ENCODE measurements at regions of chr6 and their contacts with region 1.

Region 1: GRCh38 chr6:73129653-73130443 is 95.4 kb downstream of the KHDC1L start:
- DNase-seq: peak; percentile 59
- H3K4me3 ChIP-seq: no peak overlapping the region
- H3K27ac ChIP-seq: no peak overlapping the region
- H3K4me1 ChIP-seq: no peaks in the 10 kb centered on the region
- H3K27me3 ChIP-seq: peaks cover 2 to 23% of the 10 kb centered on the region in 2 experiments
- CTCF ChIP-seq: peak; percentile 96 to 97
- POLR2A ChIP-seq: no peak

Region 2: GRCh38 chr6:72250664-72251063 is 879.2 kb before region 1 on chr6:
- CTCF ChIA-PET with region 1: interaction called, 7 read pairs
- POLR2A ChIA-PET with region 1: no interaction called
- dilution Hi-C with region 1: no loop called
- intact Hi-C with region 1: loop called (anchors 2 kb)
- DNase-seq: no peak
- H3K4me3 ChIP-seq: no peak overlapping the region
- H3K27ac ChIP-seq: no peak overlapping the region
- H3K4me1 ChIP-seq: no peaks in the 10 kb centered on the region
- H3K27me3 ChIP-seq: no peaks in the 10 kb centered on the region
- CTCF ChIP-seq: no peak
- POLR2A ChIP-seq: no peak

Region 3: DNA sequence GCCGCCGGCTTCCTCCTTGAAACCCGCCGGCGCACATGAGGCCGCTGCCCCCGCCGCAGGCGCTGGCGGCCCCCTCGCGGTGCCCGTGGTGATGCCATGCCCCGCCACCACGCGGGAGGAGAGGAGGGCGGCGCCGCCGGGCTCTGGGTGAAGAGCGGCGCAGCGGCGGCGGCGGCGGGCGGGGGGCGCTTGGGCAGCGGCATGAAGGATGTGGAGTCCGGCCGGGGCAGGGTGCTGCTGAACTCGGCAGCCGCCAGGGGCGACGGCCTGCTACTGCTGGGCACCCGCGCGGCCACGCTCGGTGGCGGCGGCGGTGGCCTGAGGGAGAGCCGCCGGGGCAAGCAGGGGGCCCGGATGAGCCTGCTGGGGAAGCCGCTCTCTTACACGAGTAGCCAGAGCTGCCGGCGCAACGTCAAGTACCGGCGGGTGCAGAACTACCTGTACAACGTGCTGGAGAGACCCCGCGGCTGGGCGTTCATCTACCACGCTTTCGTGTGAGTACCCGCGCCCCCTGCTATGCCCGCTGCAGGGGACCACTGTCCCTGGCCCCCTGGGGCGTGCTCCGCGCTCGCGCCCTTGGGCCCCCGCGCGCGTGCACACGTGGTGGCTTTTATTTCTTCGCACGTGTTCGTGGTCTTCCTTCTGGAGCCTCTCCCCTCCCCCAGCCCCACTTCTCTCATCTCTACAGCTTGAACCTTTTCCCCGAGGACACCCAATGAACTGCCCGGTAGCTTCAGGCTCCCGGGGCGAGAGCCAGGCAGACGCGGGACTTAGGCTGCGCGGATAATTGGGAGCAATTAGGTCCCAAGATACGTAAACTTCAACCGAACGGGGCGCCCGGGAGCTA is 507.5 kb before region 1 on chr6:
- CTCF ChIA-PET with region 1: interaction called, 731 read pairs
- POLR2A ChIA-PET with region 1: no interaction called
- dilution Hi-C with region 1: loop called (anchors 10 kb)
- intact Hi-C with region 1: loop called (anchors 2 kb)
- DNase-seq: no peak
- H3K4me3 ChIP-seq: peak overlapping the region in 1 of 3 experiments; percentile 23
- H3K27ac ChIP-seq: no peak overlapping the region
- H3K4me1 ChIP-seq: peaks cover 8% of the 10 kb centered on the region
- H3K27me3 ChIP-seq: peaks cover 47 to 76% of the 10 kb centered on the region in 2 experiments
- CTCF ChIP-seq: peak in 1 of 2 donors; percentile 11
- POLR2A ChIP-seq: no peak

Region 4: GRCh38 chr6:72704979-72705378 is 424.9 kb before region 1 on chr6:
- CTCF ChIA-PET with region 1: interaction called, 28 read pairs
- POLR2A ChIA-PET with region 1: no interaction called
- dilution Hi-C with region 1: no loop called
- intact Hi-C with region 1: no loop called
- DNase-seq: peak; percentile 6
- H3K4me3 ChIP-seq: no peak overlapping the region
- H3K27ac ChIP-seq: no peak overlapping the region
- H3K4me1 ChIP-seq: no peaks in the 10 kb centered on the region
- H3K27me3 ChIP-seq: peaks cover 0 to 2% of the 10 kb centered on the region in 2 experiments
- CTCF ChIP-seq: no peak
- POLR2A ChIP-seq: no peak

Region 5: DNA sequence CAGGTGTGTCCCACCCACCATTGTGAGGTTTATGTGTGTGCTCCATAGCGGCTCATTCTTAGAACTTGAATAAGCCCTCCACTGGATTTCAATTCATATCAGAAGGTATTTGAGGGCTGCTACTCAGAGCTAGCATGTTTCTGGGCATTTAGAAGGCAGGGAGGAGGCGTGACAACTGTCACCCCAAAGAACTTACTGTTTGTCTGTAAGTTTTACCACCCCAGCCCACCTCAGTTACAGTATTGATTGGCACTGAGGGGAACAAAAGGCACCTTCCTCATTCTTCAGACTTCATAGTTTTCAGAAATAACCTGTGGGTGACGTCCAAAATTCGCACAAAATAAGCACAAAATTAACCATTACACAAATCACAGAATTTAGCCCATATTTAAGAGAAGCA is 13.7 kb after region 1 on chr6:
- CTCF ChIA-PET with region 1: interaction called, 11 read pairs
- POLR2A ChIA-PET with region 1: no interaction called
- dilution Hi-C with region 1: no loop called
- intact Hi-C with region 1: no loop called
- DNase-seq: no peak
- H3K4me3 ChIP-seq: no peak overlapping the region
- H3K27ac ChIP-seq: no peak overlapping the region
- H3K4me1 ChIP-seq: no peaks in the 10 kb centered on the region
- H3K27me3 ChIP-seq: peaks cover 0 to 5% of the 10 kb centered on the region in 2 experiments
- CTCF ChIP-seq: no peak
- POLR2A ChIP-seq: no peak